Posterior vena cava (tissue), 2 donors: ENCODE measurements at regions of chr16 and their contacts with region 1.

Region 1: DNA sequence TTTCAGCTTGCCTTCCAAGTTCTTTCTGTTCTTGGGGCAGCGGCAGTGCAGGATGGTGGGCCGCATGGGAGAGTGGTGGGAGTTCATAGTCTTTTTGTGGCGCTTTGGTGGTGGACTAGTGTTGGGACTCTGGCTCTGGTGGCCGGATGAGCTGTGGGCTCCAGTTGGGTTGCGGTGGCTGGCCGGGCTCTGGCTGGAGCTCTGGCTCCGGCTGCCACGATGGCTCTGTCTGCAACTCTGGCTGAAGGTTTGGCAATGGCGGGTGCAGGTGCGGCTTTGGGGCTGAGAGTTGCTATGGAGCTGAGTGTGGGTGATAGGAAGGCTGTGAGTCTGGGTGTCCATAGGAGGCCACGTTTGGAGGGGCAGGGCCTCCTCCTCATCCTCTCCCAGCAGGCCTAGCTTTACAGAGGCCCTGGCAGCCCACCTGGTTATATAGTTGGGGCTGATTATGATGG is at the start of gene TNP2:
- DNase-seq: no peak
- total RNA-seq, gene TNP2: not detected

Region 2: GRCh38 chr16:11291091-11291703 is 22.2 kb after region 1 on chr16:
- intact Hi-C with region 1: loop called in 1 of 2 experiments (anchors 2 kb)
- DNase-seq: no peak